ENCODE measurements at regions of chr1 and their contacts with region 1.

Region 1: GRCh38 chr1:8516793-8517556 is 199.1 kb downstream of the SLC45A1 start:
- DNase-seq: peak in 2 of 9 experiments; percentile 23 to 44
- ATAC-seq: peak; percentile 55
- H3K4me3 ChIP-seq: no peak overlapping the region
- H3K4me3 Mint-ChIP-seq: peak overlapping the region; percentile 7
- H3K27ac ChIP-seq: no peak overlapping the region
- H3K27ac Mint-ChIP-seq: peak overlapping the region; percentile 68
- H3K4me1 ChIP-seq: peaks cover 37% of the 10 kb centered on the region
- H3K4me1 Mint-ChIP-seq: peaks cover 57% of the 10 kb centered on the region
- H3K27me3 ChIP-seq: no peaks in the 10 kb centered on the region
- H3K27me3 Mint-ChIP-seq: no peaks in the 10 kb centered on the region
- CTCF ChIP-seq: no peak

Region 2: DNA sequence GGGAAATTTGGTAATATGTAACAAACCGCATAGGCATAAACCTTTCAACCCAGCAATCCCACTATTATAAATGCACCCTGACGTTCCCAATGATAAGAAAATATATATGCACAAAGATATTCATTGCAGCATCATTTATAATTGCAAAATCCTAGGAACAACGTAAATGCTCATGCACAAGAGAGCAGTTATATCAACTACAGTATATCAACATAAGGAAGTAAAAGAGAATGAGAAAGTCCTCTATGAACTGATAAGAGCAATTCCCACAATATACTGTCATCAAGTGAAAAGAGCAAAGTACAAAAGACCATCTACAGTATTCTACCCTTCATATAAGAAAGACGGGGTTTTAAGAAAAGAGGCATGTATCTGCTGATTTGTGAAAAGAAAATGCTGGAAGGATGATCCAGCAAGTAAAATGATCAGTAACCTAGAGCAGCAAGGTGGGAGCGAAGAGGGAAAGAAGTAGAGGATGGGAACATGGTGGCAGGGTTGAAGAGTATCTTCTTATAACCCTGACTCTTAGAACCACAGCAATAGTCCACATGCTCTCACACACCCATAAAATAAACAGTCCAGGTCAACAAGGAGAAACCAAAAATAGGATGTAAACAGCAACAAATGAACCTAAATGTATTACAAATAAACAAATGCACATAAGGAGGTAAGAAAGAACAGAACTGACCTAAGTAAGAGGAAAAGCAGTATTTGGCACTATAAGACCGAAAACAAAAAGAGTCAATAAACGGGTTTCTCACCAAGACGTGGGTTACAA is 31.0 kb after region 1 on chr1:
- CTCF ChIA-PET with region 1: interaction called, 4 read pairs
- POLR2A ChIA-PET with region 1: no interaction called
- intact Hi-C with region 1: loop called in 1 of 2 experiments (anchors 1 kb)
- DNase-seq: no peak
- ATAC-seq: no peak
- H3K4me3 ChIP-seq: no peak overlapping the region
- H3K4me3 Mint-ChIP-seq: no peak overlapping the region
- H3K27ac ChIP-seq: no peak overlapping the region
- H3K27ac Mint-ChIP-seq: no peak overlapping the region
- H3K4me1 ChIP-seq: peaks cover 13% of the 10 kb centered on the region
- H3K4me1 Mint-ChIP-seq: peaks cover 16% of the 10 kb centered on the region
- H3K27me3 ChIP-seq: no peaks in the 10 kb centered on the region
- H3K27me3 Mint-ChIP-seq: no peaks in the 10 kb centered on the region
- CTCF ChIP-seq: no peak

Measured in CD8-positive, alpha-beta T cell (primary cell).